ENCODE measurements at regions of chr10 and their contacts with region 1.

Region 1: GRCh38 chr10:117375360-117376178 is at the start of gene PDZD8:
- DNase-seq: peak; percentile 90
- H3K4me3 ChIP-seq: peak within 1 kb of the TSS; percentile 86 to 99 (median 98)
- H3K27ac ChIP-seq: peak within 1 kb of the TSS; percentile 57
- H3K4me1 ChIP-seq: peaks cover 15% of the 10 kb centered on the region
- H3K27me3 ChIP-seq: no peaks in the 10 kb centered on the region
- CTCF ChIP-seq: no peak
- total RNA-seq, gene PDZD8: 48.6 to 63.0 TPM

Region 2: GRCh38 chr10:117204316-117204715 is 171.3 kb before region 1 on chr10:
- CTCF ChIA-PET with region 1: no interaction called
- dilution Hi-C with region 1: no loop called
- in situ Hi-C with region 1: no loop called
- intact Hi-C with region 1: no loop called
- DNase-seq: no peak
- H3K4me3 ChIP-seq: no peak overlapping the region
- H3K27ac ChIP-seq: no peak overlapping the region
- H3K4me1 ChIP-seq: no peaks in the 10 kb centered on the region
- H3K27me3 ChIP-seq: no peaks in the 10 kb centered on the region
- CTCF ChIP-seq: no peak

Region 3: GRCh38 chr10:117216611-117217195 is 158.9 kb before region 1 on chr10:
- CTCF ChIA-PET with region 1: no interaction called
- dilution Hi-C with region 1: no loop called
- in situ Hi-C with region 1: no loop called
- intact Hi-C with region 1: loop called (anchors 2 kb)
- DNase-seq: peak; percentile 59
- H3K4me3 ChIP-seq: peak overlapping the region; percentile 51 to 68 (median 56)
- H3K27ac ChIP-seq: no peak overlapping the region
- H3K4me1 ChIP-seq: peaks cover 18% of the 10 kb centered on the region
- H3K27me3 ChIP-seq: no peaks in the 10 kb centered on the region
- CTCF ChIP-seq: peak; percentile 85 to 100

Region 4: DNA sequence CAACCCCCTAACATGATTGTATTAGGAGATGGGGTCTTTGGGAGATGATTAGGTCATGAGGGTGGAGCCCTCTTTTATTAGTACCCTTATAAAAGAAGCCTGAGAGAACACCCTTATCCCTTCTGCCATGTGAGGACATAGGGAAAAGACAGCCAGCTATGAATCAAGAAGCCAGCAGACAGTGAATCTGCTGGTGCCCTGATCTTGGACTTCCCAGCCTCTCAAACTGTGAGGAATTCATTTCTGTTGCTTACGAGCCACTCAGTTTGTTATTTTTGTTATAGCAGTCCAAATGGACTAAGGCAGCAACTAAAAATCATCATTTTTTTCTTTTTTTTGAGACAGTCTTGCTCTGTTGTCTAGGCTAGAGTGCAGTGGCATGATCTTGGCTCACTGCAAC is 74.9 kb before region 1 on chr10:
- CTCF ChIA-PET with region 1: no interaction called
- dilution Hi-C with region 1: no loop called
- in situ Hi-C with region 1: no loop called
- intact Hi-C with region 1: no loop called
- DNase-seq: no peak
- H3K4me3 ChIP-seq: no peak overlapping the region
- H3K27ac ChIP-seq: no peak overlapping the region
- H3K4me1 ChIP-seq: no peaks in the 10 kb centered on the region
- H3K27me3 ChIP-seq: no peaks in the 10 kb centered on the region
- CTCF ChIP-seq: no peak

Region 5: GRCh38 chr10:117363028-117363427 is 12.5 kb before region 1 on chr10:
- CTCF ChIA-PET with region 1: no interaction called
- dilution Hi-C with region 1: no loop called
- in situ Hi-C with region 1: no loop called
- intact Hi-C with region 1: loop called (anchors 1 kb)
- DNase-seq: peak; percentile 75
- H3K4me3 ChIP-seq: peak overlapping the region in 1 of 3 experiments; percentile 32
- H3K27ac ChIP-seq: peak overlapping the region; percentile 88
- H3K4me1 ChIP-seq: peaks cover 66% of the 10 kb centered on the region
- H3K27me3 ChIP-seq: no peaks in the 10 kb centered on the region
- CTCF ChIP-seq: no peak

Region 6: DNA sequence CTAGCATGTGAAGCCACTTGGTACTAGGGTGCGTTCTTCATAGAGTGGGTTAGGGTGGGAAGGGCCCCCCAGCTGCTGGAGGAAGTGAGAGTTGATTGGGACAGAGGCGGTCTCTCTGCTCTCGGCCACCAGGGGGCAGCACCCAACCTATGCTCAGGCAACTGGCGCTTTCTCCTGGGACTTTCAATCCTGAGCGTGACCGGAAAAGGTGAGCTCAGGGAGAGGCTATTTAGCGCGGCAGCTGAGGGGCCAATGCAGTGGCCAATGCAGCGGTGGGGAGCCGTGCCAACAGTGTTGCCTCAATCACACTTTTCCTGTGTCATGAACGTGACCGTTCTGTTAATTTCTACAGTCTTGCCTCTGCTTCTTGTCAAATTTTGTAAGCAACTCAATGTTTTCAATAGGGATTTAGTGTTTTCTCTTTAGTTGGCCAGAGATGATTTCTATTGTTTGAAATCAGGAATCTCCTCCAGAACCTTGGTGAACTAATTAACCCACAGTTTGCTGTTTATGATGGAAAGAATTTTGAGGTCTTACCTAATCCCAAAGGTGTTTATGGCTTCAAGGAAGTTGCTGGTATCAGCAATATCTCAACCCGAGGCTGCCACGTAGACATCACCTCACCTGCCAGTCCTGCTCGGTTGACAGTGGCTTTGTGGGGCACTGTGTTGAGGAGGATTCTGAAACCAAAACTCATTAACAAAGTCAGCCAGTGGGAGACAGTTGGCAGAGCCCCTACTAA is 67.5 kb after region 1 on chr10:
- CTCF ChIA-PET with region 1: no interaction called
- dilution Hi-C with region 1: no loop called
- in situ Hi-C with region 1: no loop called
- intact Hi-C with region 1: loop called (anchors 2 kb)
- DNase-seq: peak; percentile 78
- H3K4me3 ChIP-seq: no peak overlapping the region
- H3K27ac ChIP-seq: peak overlapping the region; percentile 62
- H3K4me1 ChIP-seq: peaks cover 42% of the 10 kb centered on the region
- H3K27me3 ChIP-seq: no peaks in the 10 kb centered on the region
- CTCF ChIP-seq: peak; percentile 79 to 84

Measured in mammary epithelial cell (primary cell).